ENCODE measurements at regions of chr1 and their contacts with region 1.

Region 1: GRCh38 chr1:200866521-200866920 is 6.3 kb upstream of the GPR25 start:
- DNase-seq: peak; percentile 81
- H3K4me3 Mint-ChIP-seq: no peak overlapping the region
- H3K27ac Mint-ChIP-seq: no peak overlapping the region
- H3K4me1 Mint-ChIP-seq: peaks cover 66% of the 10 kb centered on the region
- H3K27me3 Mint-ChIP-seq: peaks cover 25% of the 10 kb centered on the region

Region 2: GRCh38 chr1:200811704-200812103 is 54.8 kb before region 1 on chr1:
- CTCF ChIA-PET with region 1: no interaction called
- POLR2A ChIA-PET with region 1: no interaction called
- intact Hi-C with region 1: loop called (anchors 5 kb)
- DNase-seq: no peak
- H3K4me3 Mint-ChIP-seq: no peak overlapping the region
- H3K27ac Mint-ChIP-seq: no peak overlapping the region
- H3K4me1 Mint-ChIP-seq: no peaks in the 10 kb centered on the region
- H3K27me3 Mint-ChIP-seq: no peaks in the 10 kb centered on the region

Region 3: DNA sequence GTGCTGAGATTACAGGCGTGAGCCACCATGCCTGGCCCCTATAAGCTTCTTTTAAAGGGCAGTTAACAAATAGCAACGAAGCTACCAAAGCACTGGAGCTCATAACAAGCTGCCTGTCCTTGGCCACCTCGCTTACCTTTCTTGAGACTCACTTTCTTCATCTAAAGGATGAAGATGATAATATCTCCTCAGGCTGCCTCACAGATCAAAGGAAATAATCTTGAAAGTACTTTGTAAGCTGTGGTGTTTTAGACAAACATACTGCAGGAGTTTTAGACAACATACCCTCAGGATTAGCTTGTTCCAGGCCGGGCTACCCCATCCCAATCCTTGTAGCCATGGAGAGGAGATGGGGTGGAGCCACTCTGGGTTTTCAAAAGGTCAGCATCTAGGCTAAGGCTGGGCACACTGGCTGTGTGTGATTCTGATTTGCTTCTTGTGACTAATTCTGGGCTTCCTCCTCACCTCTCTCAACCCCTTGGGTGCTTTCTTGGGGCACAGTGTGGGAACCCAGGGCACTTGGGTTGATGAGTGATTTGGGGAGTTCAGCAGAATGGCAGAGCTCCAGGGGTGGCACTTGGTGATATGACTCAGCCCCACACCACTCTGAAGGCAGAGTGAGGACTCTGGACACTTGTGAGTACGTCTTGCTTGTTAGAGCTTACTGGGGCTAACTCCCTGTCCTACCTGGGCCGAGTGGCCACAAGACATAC is 11.5 kb after region 1 on chr1:
- CTCF ChIA-PET with region 1: interaction called, 7 read pairs
- POLR2A ChIA-PET with region 1: interaction called, 7 read pairs
- intact Hi-C with region 1: loop called (anchors 1 kb)
- DNase-seq: peak; percentile 89
- H3K4me3 Mint-ChIP-seq: no peak overlapping the region
- H3K27ac Mint-ChIP-seq: no peak overlapping the region
- H3K4me1 Mint-ChIP-seq: peaks cover 56% of the 10 kb centered on the region
- H3K27me3 Mint-ChIP-seq: peaks cover 33% of the 10 kb centered on the region

Region 4: DNA sequence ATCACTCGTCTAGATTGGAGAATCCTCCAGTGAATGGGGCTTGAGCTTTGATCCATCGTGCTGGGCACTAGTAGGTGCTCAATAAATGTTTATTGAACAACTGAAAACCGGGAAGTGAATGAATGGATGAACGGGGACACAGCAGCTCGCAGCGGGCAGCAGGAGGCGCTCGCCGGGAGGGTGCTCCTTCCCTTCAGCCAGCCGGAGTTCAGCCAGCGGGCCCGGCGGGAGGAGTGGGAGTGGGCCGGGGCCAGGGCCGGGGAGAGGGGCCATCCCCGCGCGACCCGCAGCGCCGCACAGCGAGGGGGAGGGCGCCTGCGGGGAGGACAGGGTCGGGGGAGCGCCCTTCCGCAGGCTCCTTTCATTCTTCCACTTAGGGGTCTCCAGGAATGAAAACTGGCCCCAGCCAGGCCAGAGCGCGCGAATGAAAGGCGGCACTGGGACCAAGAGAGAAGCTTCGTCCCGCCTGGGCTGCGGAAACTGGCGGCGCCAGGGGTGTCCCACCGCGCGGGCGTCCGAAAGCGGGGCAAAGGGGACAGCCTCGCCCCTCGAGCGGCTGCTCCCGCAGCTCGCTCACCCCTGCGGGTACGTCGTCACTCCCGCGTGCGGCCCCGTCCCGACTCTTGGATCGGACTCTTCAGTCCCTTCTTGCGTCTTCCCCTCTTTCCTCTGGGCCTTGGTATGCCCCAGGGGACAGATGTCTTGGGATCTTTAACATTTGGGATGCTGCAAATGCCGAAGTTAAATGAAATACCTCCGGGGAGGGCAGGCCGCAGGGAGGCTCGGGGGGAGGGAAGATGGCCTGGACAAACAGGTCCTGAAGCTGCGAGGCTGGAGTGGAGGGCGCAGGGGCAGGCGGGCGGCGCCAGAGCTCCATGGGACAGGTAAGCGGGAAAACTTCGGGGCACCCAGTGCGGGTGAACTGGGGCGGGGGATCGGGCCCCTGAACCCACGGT is 24.6 kb after region 1 on chr1:
- CTCF ChIA-PET with region 1: interaction called, 18 read pairs
- POLR2A ChIA-PET with region 1: interaction called, 15 read pairs
- intact Hi-C with region 1: loop called (anchors 1 kb)
- DNase-seq: no peak
- H3K4me3 Mint-ChIP-seq: peak overlapping the region; percentile 27
- H3K27ac Mint-ChIP-seq: peak overlapping the region; percentile 29
- H3K4me1 Mint-ChIP-seq: peaks cover 52% of the 10 kb centered on the region
- H3K27me3 Mint-ChIP-seq: peaks cover 32% of the 10 kb centered on the region

Region 5: GRCh38 chr1:200905411-200906052 is 39.0 kb after region 1 on chr1:
- CTCF ChIA-PET with region 1: interaction called, 3 read pairs
- POLR2A ChIA-PET with region 1: no interaction called
- intact Hi-C with region 1: loop called (anchors 2 kb)
- DNase-seq: peak; percentile 68
- H3K4me3 Mint-ChIP-seq: no peak overlapping the region
- H3K27ac Mint-ChIP-seq: no peak overlapping the region
- H3K4me1 Mint-ChIP-seq: peaks cover 15% of the 10 kb centered on the region
- H3K27me3 Mint-ChIP-seq: peaks cover 40% of the 10 kb centered on the region

Region 6: GRCh38 chr1:200925831-200926230 is 59.3 kb after region 1 on chr1:
- CTCF ChIA-PET with region 1: no interaction called
- POLR2A ChIA-PET with region 1: interaction called, 3 read pairs
- intact Hi-C with region 1: loop called (anchors 5 kb)
- DNase-seq: peak; percentile 35
- H3K4me3 Mint-ChIP-seq: no peak overlapping the region
- H3K27ac Mint-ChIP-seq: no peak overlapping the region
- H3K4me1 Mint-ChIP-seq: peaks cover 5% of the 10 kb centered on the region
- H3K27me3 Mint-ChIP-seq: peaks cover 17% of the 10 kb centered on the region

Region 7: DNA sequence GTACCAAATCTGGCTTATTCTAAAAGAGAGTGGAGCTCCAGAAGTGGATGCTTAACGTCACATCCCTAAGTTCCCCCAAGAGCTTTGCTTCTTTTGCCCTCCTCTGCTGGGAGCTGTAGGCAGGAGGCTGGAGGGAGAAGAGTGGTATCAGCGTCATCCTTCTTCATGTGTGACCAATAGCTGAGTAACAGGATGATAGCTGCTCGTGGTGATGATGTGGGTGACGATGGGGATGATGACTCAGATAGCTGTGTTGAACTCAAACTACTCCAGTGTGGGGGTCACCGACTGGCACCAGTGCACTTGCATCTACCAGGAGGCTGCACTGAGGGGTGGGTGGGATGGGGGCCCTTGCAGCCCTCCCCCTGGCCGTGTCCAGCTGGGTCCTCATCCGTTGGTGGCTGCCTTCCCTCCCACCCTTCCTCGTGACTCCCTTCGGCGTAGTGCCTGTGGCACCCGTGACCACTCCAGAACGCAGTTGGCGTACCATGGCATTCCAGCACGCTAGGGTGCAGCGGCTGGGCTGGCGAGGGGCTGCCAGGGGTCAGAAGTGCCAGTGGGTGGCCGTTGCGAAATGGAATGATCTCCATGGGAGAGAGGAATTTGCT is 325.2 kb after region 1 on chr1:
- CTCF ChIA-PET with region 1: no interaction called
- POLR2A ChIA-PET with region 1: no interaction called
- intact Hi-C with region 1: no loop called
- DNase-seq: peak; percentile 74
- H3K4me3 Mint-ChIP-seq: no peak overlapping the region
- H3K27ac Mint-ChIP-seq: no peak overlapping the region
- H3K4me1 Mint-ChIP-seq: peaks cover 10% of the 10 kb centered on the region
- H3K27me3 Mint-ChIP-seq: peaks cover 20% of the 10 kb centered on the region